CD4-positive, alpha-beta memory T cell (primary cell): ENCODE measurements at regions of chr2 and their contacts with region 1.

Region 1: GRCh38 chr2:37648331-37649011 is 23.0 kb downstream of the CDC42EP3 start:
- DNase-seq: peak; percentile 42 to 76 (median 50)
- H3K4me3 ChIP-seq: peak overlapping the region in 1 of 2 donors; percentile 50
- H3K4me3 Mint-ChIP-seq: peak overlapping the region in 7 of 8 donors; percentile 66 to 91 (median 80)
- H3K27ac ChIP-seq: peak overlapping the region; percentile 56
- H3K27ac Mint-ChIP-seq: peak overlapping the region; percentile 85 to 98 (median 92)
- H3K4me1 ChIP-seq: peaks cover 97% of the 10 kb centered on the region
- H3K4me1 Mint-ChIP-seq: peaks cover 76 to 96% (median 88%) of the 10 kb centered on the region in 4 donors
- H3K27me3 ChIP-seq: no peaks in the 10 kb centered on the region
- H3K27me3 Mint-ChIP-seq: no peaks in the 10 kb centered on the region

Region 2: GRCh38 chr2:37537316-37537715 is 111.2 kb before region 1 on chr2:
- CTCF ChIA-PET with region 1: interaction called, 4 read pairs
- POLR2A ChIA-PET with region 1: interaction called, 3 read pairs
- intact Hi-C with region 1: loop called (anchors 1 kb)
- DNase-seq: no peak
- H3K4me3 ChIP-seq: no peak overlapping the region
- H3K4me3 Mint-ChIP-seq: no peak overlapping the region
- H3K27ac ChIP-seq: no peak overlapping the region
- H3K27ac Mint-ChIP-seq: no peak overlapping the region
- H3K4me1 ChIP-seq: no peaks in the 10 kb centered on the region
- H3K4me1 Mint-ChIP-seq: peaks cover 0 to 5% (median under 1%) of the 10 kb centered on the region in 4 donors
- H3K27me3 ChIP-seq: no peaks in the 10 kb centered on the region
- H3K27me3 Mint-ChIP-seq: peaks cover 0 to 1% of the 10 kb centered on the region in 2 donors

Region 3: GRCh38 chr2:37615804-37616676 is 32.4 kb before region 1 on chr2:
- CTCF ChIA-PET with region 1: interaction called, 23 read pairs
- POLR2A ChIA-PET with region 1: interaction called, 34 read pairs
- intact Hi-C with region 1: no loop called
- DNase-seq: peak; percentile 73 to 81 (median 77)
- H3K4me3 ChIP-seq: no peak overlapping the region
- H3K4me3 Mint-ChIP-seq: peak overlapping the region in 7 of 8 donors; percentile 26 to 76 (median 74)
- H3K27ac ChIP-seq: peak overlapping the region; percentile 37
- H3K27ac Mint-ChIP-seq: peak overlapping the region; percentile 90 to 97 (median 96)
- H3K4me1 ChIP-seq: peaks cover 72% of the 10 kb centered on the region
- H3K4me1 Mint-ChIP-seq: peaks cover 53 to 80% (median 70%) of the 10 kb centered on the region in 4 donors
- H3K27me3 ChIP-seq: no peaks in the 10 kb centered on the region
- H3K27me3 Mint-ChIP-seq: no peaks in the 10 kb centered on the region

Region 4: GRCh38 chr2:37635504-37636380 is 12.7 kb before region 1 on chr2:
- CTCF ChIA-PET with region 1: interaction called, 9 read pairs
- POLR2A ChIA-PET with region 1: interaction called, 14 read pairs
- intact Hi-C with region 1: loop called (anchors 1 kb)
- DNase-seq: peak; percentile 70 to 94 (median 78)
- H3K4me3 ChIP-seq: peak overlapping the region in 1 of 2 donors; percentile 22
- H3K4me3 Mint-ChIP-seq: peak overlapping the region in 7 of 8 donors; percentile 54 to 80 (median 66)
- H3K27ac ChIP-seq: peak overlapping the region; percentile 72
- H3K27ac Mint-ChIP-seq: peak overlapping the region; percentile 92 to 98 (median 94)
- H3K4me1 ChIP-seq: peaks cover 76% of the 10 kb centered on the region
- H3K4me1 Mint-ChIP-seq: peaks cover 68 to 90% (median 75%) of the 10 kb centered on the region in 4 donors
- H3K27me3 ChIP-seq: no peaks in the 10 kb centered on the region
- H3K27me3 Mint-ChIP-seq: no peaks in the 10 kb centered on the region

Region 5: DNA sequence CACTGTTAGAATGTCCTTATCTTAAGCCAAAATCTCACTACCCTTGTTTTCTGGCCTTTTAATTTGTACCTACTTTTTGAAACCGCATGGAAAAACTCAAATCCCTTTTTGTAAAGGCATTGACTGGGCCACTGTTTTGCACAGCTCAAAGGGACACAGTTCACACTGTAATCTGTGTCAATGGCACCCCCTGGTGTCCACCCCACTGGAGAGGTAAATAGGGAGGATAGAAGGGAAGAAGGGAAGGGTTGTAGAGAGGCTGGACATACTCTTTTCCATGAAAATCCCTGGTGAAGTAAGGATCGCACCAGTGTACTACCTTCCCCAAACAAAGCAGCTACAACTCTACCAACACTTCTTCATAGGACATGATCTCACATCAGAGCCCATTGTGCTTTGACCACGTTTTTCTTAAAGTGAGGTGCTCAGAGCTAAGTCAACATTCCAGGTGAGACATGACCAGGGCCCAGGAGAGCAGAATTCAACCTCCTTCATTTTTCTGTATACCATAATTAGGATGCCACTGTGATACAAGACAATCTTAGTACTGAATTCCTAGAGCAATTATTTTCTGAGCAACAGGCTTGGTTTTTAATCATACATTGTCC is 184.2 kb after region 1 on chr2:
- CTCF ChIA-PET with region 1: interaction called, 22 read pairs
- POLR2A ChIA-PET with region 1: no interaction called
- intact Hi-C with region 1: loop called (anchors 10 kb)
- DNase-seq: peak; percentile 69 to 75 (median 74)
- H3K4me3 ChIP-seq: no peak overlapping the region
- H3K4me3 Mint-ChIP-seq: no peak overlapping the region
- H3K27ac ChIP-seq: no peak overlapping the region
- H3K27ac Mint-ChIP-seq: peak overlapping the region in 2 of 7 donors; percentile 16 to 48
- H3K4me1 ChIP-seq: peaks cover 16% of the 10 kb centered on the region
- H3K4me1 Mint-ChIP-seq: peaks cover 5 to 26% (median 11%) of the 10 kb centered on the region in 4 donors
- H3K27me3 ChIP-seq: no peaks in the 10 kb centered on the region
- H3K27me3 Mint-ChIP-seq: no peaks in the 10 kb centered on the region